Activated B cell treated with CpG ODN at 0.5 μM for 24 hours (primary cell): ENCODE measurements at regions of chr11 and their contacts with region 1.

Region 1: DNA sequence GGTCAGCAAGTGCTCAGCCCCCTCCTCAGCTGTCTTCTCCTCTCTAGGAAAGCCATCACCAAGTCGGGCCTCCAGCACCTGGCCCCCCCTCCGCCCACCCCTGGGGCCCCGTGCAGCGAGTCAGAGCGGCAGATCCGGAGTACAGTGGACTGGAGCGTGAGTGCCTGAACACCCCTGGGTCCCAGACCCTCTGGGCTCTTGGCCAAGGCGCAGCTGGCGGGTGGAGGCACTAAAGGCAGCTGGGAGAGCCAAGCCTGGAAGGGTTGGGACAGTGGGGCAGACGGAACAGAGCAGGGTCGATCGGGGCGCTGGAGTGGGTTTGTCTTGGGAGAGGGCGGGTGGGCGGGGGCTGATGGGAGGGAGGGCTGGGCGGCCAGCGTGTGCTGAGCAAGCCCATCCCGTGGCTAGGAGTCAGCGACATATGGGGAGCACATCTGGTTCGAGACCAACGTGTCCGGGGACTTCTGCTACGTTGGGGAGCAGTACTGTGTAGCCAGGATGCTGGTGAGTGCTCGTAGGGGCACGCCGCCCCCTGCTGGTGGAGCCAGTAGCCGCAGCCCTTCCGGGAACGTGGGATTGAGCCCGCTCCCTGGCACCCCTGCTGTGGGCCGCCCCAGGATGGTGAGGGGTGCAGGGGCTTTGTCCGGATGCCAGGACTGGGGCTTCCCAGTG is 14.1 kb upstream of the MDK start:
- DNase-seq: peak; percentile 62
- ATAC-seq: peak; percentile 84
- H3K4me3 Mint-ChIP-seq: no peak overlapping the region
- H3K27ac Mint-ChIP-seq: no peak overlapping the region
- H3K4me1 Mint-ChIP-seq: peaks cover 10% of the 10 kb centered on the region
- H3K27me3 Mint-ChIP-seq: no peaks in the 10 kb centered on the region
- CTCF ChIP-seq: peak; percentile 19

Region 2: DNA sequence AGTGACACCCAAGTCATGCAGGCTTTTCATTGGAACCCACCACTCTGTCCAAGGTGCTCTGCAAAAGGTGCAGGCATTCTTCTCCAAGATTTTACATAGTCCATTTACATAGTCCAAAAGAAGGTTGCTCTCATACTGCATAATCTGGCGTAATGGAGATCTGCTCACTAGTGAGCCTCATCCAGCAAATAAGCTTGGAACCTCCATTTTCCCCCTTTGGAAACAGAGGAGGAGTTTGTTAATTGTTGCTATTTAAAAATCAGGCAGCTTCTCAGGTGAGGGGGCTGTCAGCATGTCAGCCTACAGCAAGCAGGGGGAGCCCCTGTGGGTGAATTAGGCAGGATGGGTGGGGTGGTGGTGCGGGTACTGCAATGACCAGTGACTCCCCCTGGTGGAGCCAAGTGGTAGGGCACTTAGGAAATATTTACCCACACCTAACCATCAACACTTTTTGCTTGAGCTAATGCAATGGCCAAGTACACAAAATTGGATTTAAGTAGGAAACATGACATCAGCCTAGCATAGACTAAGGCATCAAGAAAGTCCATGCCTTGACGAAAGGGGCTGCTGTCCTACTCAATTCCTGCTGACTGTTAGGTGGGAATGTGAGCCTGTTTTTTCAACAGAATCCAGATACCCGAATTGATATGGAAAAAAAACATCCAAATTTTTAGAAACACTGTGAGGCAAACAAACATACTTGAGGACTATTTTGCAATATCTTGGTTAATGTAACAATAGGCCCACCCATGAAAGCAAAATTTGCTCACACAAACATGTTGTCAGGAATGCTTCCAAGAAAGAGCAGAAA is 161.9 kb after region 1 on chr11:
- CTCF ChIA-PET with region 1: no interaction called
- POLR2A ChIA-PET with region 1: no interaction called
- intact Hi-C with region 1: loop called (anchors 2 kb)
- DNase-seq: peak; percentile 41
- ATAC-seq: peak; percentile 99
- H3K4me3 Mint-ChIP-seq: no peak overlapping the region
- H3K27ac Mint-ChIP-seq: no peak overlapping the region
- H3K4me1 Mint-ChIP-seq: peaks cover 22% of the 10 kb centered on the region
- H3K27me3 Mint-ChIP-seq: no peaks in the 10 kb centered on the region
- CTCF ChIP-seq: no peak